ENCODE measurements at regions of chr17 and their contacts with region 1.

Region 1: GRCh38 chr17:73429440-73430164 is 117.8 kb upstream of the CDC42EP4 start:
- DNase-seq: peak; percentile 92
- H3K4me3 ChIP-seq: no peak overlapping the region
- H3K27ac ChIP-seq: no peak overlapping the region
- H3K4me1 ChIP-seq: peaks cover 6% of the 10 kb centered on the region
- H3K27me3 ChIP-seq: no peaks in the 10 kb centered on the region
- CTCF ChIP-seq: peak; percentile 96

Region 2: DNA sequence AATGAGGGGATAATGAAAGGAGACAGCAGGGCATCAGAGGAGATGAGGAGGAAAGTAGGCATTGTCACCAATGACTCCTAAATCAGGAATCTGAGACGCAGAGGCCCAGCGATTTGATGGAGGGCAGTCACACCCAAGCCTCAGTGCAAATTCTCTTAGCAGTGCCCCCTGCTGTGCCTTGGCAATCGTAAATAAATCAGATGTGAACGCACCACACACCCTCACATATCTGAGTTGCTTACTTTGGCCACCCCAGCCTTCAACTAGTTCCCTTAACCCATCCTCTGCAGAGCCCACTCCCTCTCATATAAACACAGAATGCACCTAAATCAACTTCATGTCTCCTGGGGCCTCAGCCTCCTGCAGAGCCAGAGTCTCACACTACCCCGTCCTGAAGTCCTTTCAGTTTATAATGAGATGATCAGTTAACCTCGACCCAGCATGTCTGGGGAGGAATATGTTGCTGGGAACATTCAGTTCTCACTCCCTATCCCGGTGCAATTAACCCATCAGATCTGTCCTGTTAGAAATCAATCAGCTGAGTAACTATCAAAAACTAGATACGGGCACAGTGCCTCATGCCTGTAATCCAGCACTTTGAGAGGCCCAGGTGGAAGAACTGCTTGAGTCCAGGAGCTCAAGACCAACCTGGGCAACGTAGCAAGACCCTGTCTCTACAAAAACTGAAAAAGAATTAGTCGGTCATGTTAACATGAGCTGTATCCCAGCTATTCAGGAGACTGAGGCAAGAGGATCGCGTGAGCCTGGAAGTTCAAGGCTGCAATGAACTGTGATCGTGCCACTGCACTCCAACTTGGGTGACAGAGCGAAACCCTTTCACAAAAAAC is 415.6 kb before region 1 on chr17:
- intact Hi-C with region 1: no loop called
- DNase-seq: no peak
- H3K4me3 ChIP-seq: no peak overlapping the region
- H3K27ac ChIP-seq: no peak overlapping the region
- H3K4me1 ChIP-seq: no peaks in the 10 kb centered on the region
- H3K27me3 ChIP-seq: no peaks in the 10 kb centered on the region
- CTCF ChIP-seq: no peak

Region 3: GRCh38 chr17:73710095-73710592 is 280.5 kb after region 1 on chr17:
- intact Hi-C with region 1: loop called (anchors 2 kb)
- DNase-seq: peak; percentile 82
- H3K4me3 ChIP-seq: no peak overlapping the region
- H3K27ac ChIP-seq: no peak overlapping the region
- H3K4me1 ChIP-seq: no peaks in the 10 kb centered on the region
- H3K27me3 ChIP-seq: no peaks in the 10 kb centered on the region
- CTCF ChIP-seq: peak; percentile 65

Region 4: DNA sequence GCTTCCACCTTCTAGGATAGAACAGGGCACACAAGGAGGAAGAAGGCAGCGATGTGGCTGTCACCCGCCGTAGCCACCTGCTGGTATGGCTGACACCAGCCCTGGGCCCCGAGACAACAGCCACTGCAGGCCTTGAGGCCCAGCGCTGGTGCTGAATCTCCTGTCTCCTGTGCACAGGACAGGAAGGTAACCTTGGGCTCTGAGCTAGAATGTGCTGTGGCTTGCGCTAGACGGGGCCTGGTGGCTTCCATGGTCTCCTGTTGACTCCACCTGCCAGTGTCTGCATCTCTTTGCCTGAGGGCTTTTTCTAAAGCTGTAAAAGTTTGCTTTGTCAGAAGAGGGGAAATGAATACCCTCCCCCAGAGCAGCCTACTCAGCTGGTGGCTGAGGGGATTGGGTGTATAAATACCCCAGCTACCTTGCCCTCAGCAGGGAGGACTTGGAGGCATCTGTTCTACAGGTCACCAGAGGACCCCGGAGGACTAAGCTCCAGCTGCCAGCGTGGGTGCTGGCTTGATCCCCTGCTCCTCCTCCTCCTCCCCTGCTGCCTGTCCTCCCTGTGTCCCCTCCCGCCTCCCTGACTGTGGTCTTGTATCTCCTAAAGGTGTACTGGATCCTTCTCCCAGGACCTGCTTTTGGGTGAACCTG is 290.7 kb after region 1 on chr17:
- intact Hi-C with region 1: no loop called
- DNase-seq: no peak
- H3K4me3 ChIP-seq: no peak overlapping the region
- H3K27ac ChIP-seq: no peak overlapping the region
- H3K4me1 ChIP-seq: no peaks in the 10 kb centered on the region
- H3K27me3 ChIP-seq: no peaks in the 10 kb centered on the region
- CTCF ChIP-seq: no peak

Region 5: DNA sequence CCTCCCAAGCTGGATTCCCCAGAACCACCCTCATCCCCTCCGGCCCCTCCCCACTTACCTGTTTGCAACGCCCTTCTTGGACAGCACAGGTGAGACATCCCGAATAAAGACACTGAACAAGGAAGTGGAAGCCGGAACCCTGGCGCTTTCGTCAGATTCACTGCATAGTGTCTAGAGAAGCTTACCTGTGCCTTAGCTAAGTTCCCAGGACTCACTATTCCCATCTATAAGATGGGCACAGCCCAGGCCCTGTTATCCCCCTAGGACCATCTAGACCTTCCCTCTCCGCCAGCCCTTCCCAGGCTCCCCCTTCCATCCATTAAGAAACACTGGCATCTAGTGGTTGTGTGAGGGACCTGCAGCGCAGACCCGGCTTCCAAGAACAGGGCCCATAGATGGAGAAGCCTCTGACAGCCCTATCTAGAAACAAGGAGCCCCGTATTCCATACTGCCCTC is 747.0 kb after region 1 on chr17:
- intact Hi-C with region 1: loop called (anchors 5 kb)
- DNase-seq: peak; percentile 64
- H3K4me3 ChIP-seq: no peak overlapping the region
- H3K27ac ChIP-seq: no peak overlapping the region
- H3K4me1 ChIP-seq: no peaks in the 10 kb centered on the region
- H3K27me3 ChIP-seq: peaks cover 4% of the 10 kb centered on the region
- CTCF ChIP-seq: peak; percentile 66

Measured in colonic mucosa (tissue), 4 donors.